OCI-LY7 (cell line): ENCODE measurements at regions of chr17 and their contacts with region 1.

Region 1: GRCh38 chr17:81666342-81667191 is at the starts of genes CCDC137 and OXLD1:
- DNase-seq: peak; percentile 99
- H3K4me3 ChIP-seq: peak within 1 kb of the TSS; percentile 100
- H3K27ac ChIP-seq: peak within 1 kb of the TSS; percentile 62
- H3K4me1 ChIP-seq: peaks cover 25% of the 10 kb centered on the region
- CTCF ChIP-seq: no peak
- total RNA-seq, gene CCDC137: 39.4 and 39.9 TPM in 2 replicates
- total RNA-seq, gene OXLD1: 148 and 151 TPM in 2 replicates

Region 2: GRCh38 chr17:81317961-81318605 is 348.5 kb before region 1 on chr17:
- CTCF ChIA-PET with region 1: no interaction called
- POLR2A ChIA-PET with region 1: no interaction called
- intact Hi-C with region 1: no loop called
- DNase-seq: no peak
- H3K4me3 ChIP-seq: no peak overlapping the region
- H3K27ac ChIP-seq: no peak overlapping the region
- H3K4me1 ChIP-seq: no peaks in the 10 kb centered on the region
- CTCF ChIP-seq: no peak

Region 3: GRCh38 chr17:81537343-81537855 is 129.2 kb before region 1 on chr17:
- CTCF ChIA-PET with region 1: no interaction called
- POLR2A ChIA-PET with region 1: no interaction called
- intact Hi-C with region 1: no loop called
- DNase-seq: peak; percentile 58
- H3K4me3 ChIP-seq: no peak overlapping the region
- H3K27ac ChIP-seq: no peak overlapping the region
- H3K4me1 ChIP-seq: peaks cover 14% of the 10 kb centered on the region
- CTCF ChIP-seq: peak; percentile 69

Region 4: GRCh38 chr17:81636505-81637288 is 29.9 kb before region 1 on chr17 and contains the starts of genes NPLOC4 and TSPAN10:
- CTCF ChIA-PET with region 1: no interaction called
- POLR2A ChIA-PET with region 1: no interaction called
- intact Hi-C with region 1: loop called (anchors 1 kb)
- DNase-seq: peak; percentile 93
- H3K4me3 ChIP-seq: peak within 1 kb of the TSS; percentile 84
- H3K27ac ChIP-seq: peak within 1 kb of the TSS; percentile 14
- H3K4me1 ChIP-seq: peaks cover 15% of the 10 kb centered on the region
- CTCF ChIP-seq: no peak
- total RNA-seq, gene NPLOC4: 59.4 and 69.6 TPM in 2 replicates
- total RNA-seq, gene TSPAN10: 0.95 and 1.3 TPM in 2 replicates